Activated CD8-positive, alpha-beta T cell treated with anti-CD3 and anti-CD28 coated beads, Interleukin-2, amount 10 ng/mL, durations not matched to agents 7 days and 5 days (primary cell): ENCODE measurements at regions of chr1 and their contacts with region 1.

Region 1: GRCh38 chr1:155323798-155324610 is 3.3 kb downstream of the RUSC1 start:
- DNase-seq: peak; percentile 93
- ATAC-seq: peak; percentile 86
- H3K4me3 Mint-ChIP-seq: peak overlapping the region; percentile 83
- H3K27ac Mint-ChIP-seq: peak overlapping the region; percentile 77
- H3K4me1 Mint-ChIP-seq: peaks cover 47% of the 10 kb centered on the region
- H3K27me3 Mint-ChIP-seq: no peaks in the 10 kb centered on the region

Region 2: GRCh38 chr1:155308493-155309422 is 15.2 kb before region 1 on chr1 and contains the start of gene FDPS:
- CTCF ChIA-PET with region 1: interaction called, 36 read pairs
- POLR2A ChIA-PET with region 1: interaction called, 7 read pairs
- DNase-seq: peak; percentile 99
- ATAC-seq: peak; percentile 99
- H3K4me3 Mint-ChIP-seq: peak within 1 kb of the TSS; percentile 98
- H3K27ac Mint-ChIP-seq: peak within 1 kb of the TSS; percentile 93
- H3K4me1 Mint-ChIP-seq: peaks cover 42% of the 10 kb centered on the region
- H3K27me3 Mint-ChIP-seq: no peaks in the 10 kb centered on the region
- total RNA-seq, gene FDPS: 270 to 271 TPM